ENCODE measurements at regions of chr1 and their contacts with region 1.

Region 1: DNA sequence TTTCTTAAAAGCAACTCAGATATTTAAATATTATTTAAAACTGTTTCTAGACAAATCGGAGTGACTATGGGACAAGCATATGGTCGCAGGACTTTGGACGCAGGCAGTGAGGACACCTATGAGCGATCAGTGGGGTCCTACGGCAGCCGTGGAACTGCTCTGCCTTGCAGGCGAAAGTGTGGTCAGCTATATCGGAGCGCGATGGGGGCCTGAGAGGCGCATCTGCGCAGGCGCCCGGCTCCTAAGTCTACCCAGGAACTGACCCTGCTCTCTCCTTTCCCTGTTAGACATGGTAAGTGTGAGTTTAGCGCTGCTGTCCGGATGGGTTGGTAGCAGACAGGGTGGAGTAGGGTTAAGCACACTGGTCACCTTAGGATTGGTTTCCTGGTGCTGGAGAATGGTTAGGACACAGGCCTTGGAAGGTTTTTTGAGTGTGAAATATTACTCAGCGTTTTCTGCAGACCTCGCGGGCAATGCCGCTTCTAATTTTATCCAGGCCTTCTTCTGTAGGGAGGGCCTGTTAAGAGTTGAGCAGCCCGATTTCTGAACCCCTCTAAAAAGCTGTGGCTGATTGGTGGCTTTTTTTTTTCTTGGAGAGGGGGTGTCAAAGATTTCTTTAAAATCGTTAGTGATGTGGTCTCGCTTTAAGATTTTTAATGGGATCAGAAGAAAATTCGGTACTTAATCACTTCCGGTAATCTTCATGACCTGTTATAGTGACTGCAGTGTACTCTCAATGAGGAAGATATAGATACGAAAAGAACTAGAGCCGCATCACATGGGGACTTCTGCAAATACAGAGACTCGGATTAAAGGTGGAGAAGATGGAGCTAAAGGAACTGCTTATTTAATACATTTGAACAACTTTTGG is at the start of gene RABGGTB:
- DNase-seq: peak; percentile 98
- H3K4me3 Mint-ChIP-seq: peak within 1 kb of the TSS; percentile 89
- H3K27ac Mint-ChIP-seq: peak within 1 kb of the TSS; percentile 96
- H3K4me1 Mint-ChIP-seq: peaks cover 30% of the 10 kb centered on the region
- H3K27me3 Mint-ChIP-seq: peaks cover 6% of the 10 kb centered on the region
- total RNA-seq, gene RABGGTB: 235 and 237 TPM in 2 replicates

Region 2: DNA sequence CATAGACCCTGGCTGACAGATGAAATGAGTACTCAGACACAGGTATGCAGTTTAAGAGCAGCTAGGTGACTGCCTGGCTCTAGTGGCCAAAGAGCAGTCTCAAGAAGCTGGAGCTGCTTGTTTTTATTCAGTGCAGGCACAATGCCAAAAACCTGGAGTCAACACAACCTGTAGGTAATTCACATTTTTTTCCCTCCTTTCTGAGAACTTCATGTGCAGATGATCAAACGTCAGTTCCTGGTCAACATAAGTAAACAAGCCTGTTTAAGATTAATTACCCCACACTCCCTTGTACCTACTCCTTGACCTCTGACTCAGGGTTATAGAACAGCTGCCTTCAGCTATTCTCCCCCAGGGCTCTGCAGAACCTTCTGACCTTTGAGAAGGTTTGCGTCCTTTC is 79.0 kb before region 1 on chr1:
- intact Hi-C with region 1: no loop called
- DNase-seq: no peak
- H3K4me3 Mint-ChIP-seq: no peak overlapping the region
- H3K27ac Mint-ChIP-seq: no peak overlapping the region
- H3K4me1 Mint-ChIP-seq: no peaks in the 10 kb centered on the region
- H3K27me3 Mint-ChIP-seq: peaks cover 23% of the 10 kb centered on the region

Region 3: DNA sequence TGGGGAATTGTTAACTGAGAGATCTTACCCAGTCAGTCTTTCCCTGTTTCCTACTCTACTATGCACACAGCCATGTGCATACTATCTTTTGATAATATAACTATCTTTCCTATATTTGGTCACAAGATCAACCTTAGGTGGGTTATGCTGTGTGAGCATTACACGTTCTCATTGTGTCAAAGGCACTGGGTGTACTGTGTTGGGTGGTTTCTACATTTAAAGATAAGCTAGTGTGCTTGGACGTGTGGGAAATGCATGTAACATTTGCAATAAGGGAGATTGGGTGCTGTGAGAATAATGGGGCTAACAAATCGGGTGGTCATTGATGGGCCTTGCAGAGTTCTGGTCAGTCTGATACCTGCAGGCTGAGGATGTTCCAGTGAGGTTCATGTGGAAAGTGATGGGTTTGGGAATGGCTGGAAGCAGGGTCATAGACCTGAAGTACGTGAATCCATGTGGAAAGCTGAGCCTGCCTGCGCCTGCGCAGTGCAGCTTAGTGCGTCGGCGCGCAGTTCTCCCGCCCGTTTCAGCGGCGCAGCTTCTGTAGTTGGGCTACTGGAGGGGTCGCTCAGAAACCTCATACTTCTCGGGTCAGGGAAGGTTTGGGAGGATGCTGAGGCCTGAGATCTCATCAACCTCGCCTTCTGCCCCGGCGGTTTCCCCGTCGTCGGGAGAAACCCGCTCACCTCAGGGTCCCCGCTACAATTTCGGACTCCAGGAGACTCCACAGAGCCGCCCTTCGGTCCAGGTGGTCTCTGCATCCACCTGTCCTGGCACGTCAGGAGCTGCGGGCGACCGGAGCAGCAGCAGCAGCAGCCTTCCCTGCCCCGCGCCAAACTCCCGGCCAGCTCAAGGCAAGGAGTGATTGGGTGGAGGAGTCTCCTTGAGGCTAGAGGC is 10.4 kb after region 1 on chr1 and contains the start of gene MSH4:
- intact Hi-C with region 1: loop called (anchors 1 kb)
- DNase-seq: no peak
- H3K4me3 Mint-ChIP-seq: no peak within 1 kb of the TSS
- H3K27ac Mint-ChIP-seq: peak within 1 kb of the TSS; percentile 56
- H3K4me1 Mint-ChIP-seq: peaks cover 14% of the 10 kb centered on the region
- H3K27me3 Mint-ChIP-seq: no peaks in the 10 kb centered on the region
- total RNA-seq, gene MSH4: 0.33 and 0.42 TPM in 2 replicates

Region 4: GRCh38 chr1:75838079-75838478 is 51.9 kb after region 1 on chr1:
- intact Hi-C with region 1: no loop called
- DNase-seq: no peak
- H3K4me3 Mint-ChIP-seq: no peak overlapping the region
- H3K27ac Mint-ChIP-seq: no peak overlapping the region
- H3K4me1 Mint-ChIP-seq: no peaks in the 10 kb centered on the region
- H3K27me3 Mint-ChIP-seq: no peaks in the 10 kb centered on the region

Region 5: GRCh38 chr1:75937034-75937433 is 150.8 kb after region 1 on chr1:
- intact Hi-C with region 1: no loop called
- DNase-seq: no peak
- H3K4me3 Mint-ChIP-seq: no peak overlapping the region
- H3K27ac Mint-ChIP-seq: no peak overlapping the region
- H3K4me1 Mint-ChIP-seq: no peaks in the 10 kb centered on the region
- H3K27me3 Mint-ChIP-seq: no peaks in the 10 kb centered on the region

Region 6: GRCh38 chr1:76023669-76024435 is 237.6 kb after region 1 on chr1:
- intact Hi-C with region 1: no loop called
- DNase-seq: peak; percentile 67
- H3K4me3 Mint-ChIP-seq: no peak overlapping the region
- H3K27ac Mint-ChIP-seq: no peak overlapping the region
- H3K4me1 Mint-ChIP-seq: peaks cover 4% of the 10 kb centered on the region
- H3K27me3 Mint-ChIP-seq: peaks cover 9% of the 10 kb centered on the region

Measured in activated CD4-positive, alpha-beta T cell treated with anti-CD3 and anti-CD28 coated beads, Interleukin-2, amount 10 ng/mL, durations not matched to agents 24 days and 14 days (primary cell).